ENCODE measurements at regions of chr3 and their contacts with region 1.

Region 1: DNA sequence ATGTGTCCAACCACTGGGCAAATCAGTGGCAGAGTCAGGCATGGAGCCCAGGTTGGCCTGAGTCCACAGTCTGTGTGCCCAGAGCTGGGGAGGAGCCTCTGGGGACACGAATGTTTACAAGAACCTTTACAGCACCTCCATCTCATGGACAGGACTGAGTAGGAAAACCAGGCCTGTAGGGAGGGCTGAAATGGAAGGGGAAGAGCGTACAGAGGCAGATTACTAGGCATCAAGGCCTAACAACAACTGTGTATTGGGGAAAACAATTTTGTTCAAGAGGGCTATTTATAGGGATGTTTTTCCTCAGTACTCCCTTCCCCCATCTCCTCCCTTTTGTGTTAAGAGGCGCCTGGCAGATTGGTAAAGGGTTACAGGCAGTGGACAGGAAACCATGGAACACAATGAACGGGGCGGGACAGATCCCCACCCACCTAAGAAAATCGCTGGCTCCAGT is 15.1 kb upstream of the ARHGAP31 start:
- DNase-seq: peak in 1 of 2 donors; percentile 55
- H3K4me3 ChIP-seq: no peak overlapping the region
- H3K27ac ChIP-seq: peak overlapping the region; percentile 31 to 45 (median 43)
- H3K4me1 ChIP-seq: peaks cover 4 to 6% of the 10 kb centered on the region in 2 donors
- H3K27me3 ChIP-seq: no peaks in the 10 kb centered on the region
- CTCF ChIP-seq: no peak
- POLR2A ChIP-seq: no peak

Region 2: DNA sequence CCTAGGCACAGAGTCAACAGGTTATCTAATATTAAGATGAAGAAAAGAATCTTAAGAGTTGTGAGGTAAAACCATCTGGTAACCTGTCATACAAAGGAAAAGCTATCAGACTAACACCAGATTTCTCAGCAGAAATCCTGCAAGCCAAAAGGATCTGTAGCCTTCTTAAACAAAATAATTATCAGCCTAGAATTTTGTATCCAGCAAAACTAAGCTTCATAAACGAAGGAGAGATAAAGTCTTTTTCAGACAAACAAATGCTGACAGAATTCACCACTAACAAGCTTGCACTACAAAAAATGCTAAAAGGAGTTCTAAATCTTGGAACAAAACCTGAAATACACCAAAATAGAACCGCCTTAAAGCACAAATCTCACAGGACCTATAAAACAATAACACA is 234.5 kb before region 1 on chr3:
- intact Hi-C with region 1: no loop called
- DNase-seq: no peak
- H3K4me3 ChIP-seq: no peak overlapping the region
- H3K27ac ChIP-seq: no peak overlapping the region
- H3K4me1 ChIP-seq: no peaks in the 10 kb centered on the region
- H3K27me3 ChIP-seq: no peaks in the 10 kb centered on the region
- CTCF ChIP-seq: no peak
- POLR2A ChIP-seq: no peak

Region 3: DNA sequence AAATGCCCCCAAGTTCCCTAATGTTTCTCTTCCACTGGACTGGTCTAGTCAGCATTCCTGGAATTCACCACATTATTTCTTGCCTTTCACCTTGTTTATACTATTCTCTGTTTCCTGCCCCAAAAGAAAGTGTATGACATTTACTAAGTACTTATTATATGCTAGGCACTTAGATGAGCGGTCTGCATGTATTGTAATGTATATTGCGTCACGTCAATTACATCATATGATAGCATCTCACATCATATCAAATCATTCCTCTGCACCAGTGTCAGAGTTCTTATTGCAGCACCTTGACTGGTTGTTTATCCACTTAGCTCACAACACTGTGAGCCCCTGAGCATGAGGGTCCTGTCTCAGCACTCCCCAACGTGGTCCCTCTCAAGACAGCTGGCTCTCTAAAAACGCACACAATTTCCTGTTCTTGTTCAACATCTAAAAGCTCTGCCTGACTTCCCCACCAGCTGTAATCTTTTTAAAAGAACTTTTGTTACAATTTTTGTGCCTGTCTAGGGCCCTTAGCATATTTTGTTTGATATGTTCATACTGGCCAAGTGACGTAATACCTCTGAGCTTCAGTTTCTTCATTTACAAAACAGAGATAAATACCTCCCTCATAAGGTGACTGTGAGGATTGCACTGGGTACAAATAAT is 73.8 kb after region 1 on chr3:
- intact Hi-C with region 1: loop called (anchors 10 kb)
- DNase-seq: no peak
- H3K4me3 ChIP-seq: no peak overlapping the region
- H3K27ac ChIP-seq: peak overlapping the region; percentile 27 to 75 (median 27)
- H3K4me1 ChIP-seq: peaks cover 55 to 56% of the 10 kb centered on the region in 2 donors
- H3K27me3 ChIP-seq: no peaks in the 10 kb centered on the region
- CTCF ChIP-seq: peak in 5 of 6 experiments; percentile 18 to 61 (median 41)
- POLR2A ChIP-seq: no peak

Region 4: DNA sequence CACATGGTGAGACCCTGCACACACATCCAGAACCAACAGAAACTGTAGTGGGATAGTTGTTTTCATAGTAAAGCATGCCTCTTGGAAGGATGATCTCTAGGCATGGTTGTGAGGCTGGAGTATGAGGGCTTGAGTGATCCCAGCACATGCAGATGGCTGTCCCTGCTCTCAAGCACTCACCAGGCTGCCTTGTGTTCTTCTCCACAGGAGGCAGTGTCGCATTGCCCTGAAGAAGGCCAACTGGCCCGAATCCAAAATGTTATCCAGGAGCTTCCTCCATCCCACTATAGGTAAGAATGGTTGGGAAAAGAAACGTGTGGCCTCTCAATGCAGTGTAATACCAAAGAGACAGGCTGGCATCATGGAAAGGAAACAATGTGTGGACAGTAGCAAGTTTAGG is 101.6 kb after region 1 on chr3:
- intact Hi-C with region 1: loop called (anchors 10 kb)
- DNase-seq: peak; percentile 27 to 38
- H3K4me3 ChIP-seq: no peak overlapping the region
- H3K27ac ChIP-seq: no peak overlapping the region
- H3K4me1 ChIP-seq: no peaks in the 10 kb centered on the region
- H3K27me3 ChIP-seq: no peaks in the 10 kb centered on the region
- CTCF ChIP-seq: peak in 2 of 6 experiments; percentile 12 to 30
- POLR2A ChIP-seq: no peak

Region 5: GRCh38 chr3:119463171-119464169 is 184.3 kb after region 1 on chr3 and contains the start of gene TMEM39A:
- intact Hi-C with region 1: loop called (anchors 10 kb)
- DNase-seq: peak; percentile 100
- H3K4me3 ChIP-seq: peak within 1 kb of the TSS; percentile 87 to 97 (median 89)
- H3K27ac ChIP-seq: peak within 1 kb of the TSS; percentile 83 to 85 (median 85)
- H3K4me1 ChIP-seq: peaks cover 0 to 25% of the 10 kb centered on the region in 2 donors
- H3K27me3 ChIP-seq: no peaks in the 10 kb centered on the region
- CTCF ChIP-seq: peak in 2 of 6 experiments; percentile 33
- POLR2A ChIP-seq: peak in 1 of 2 donors; percentile 91
- total RNA-seq, gene TMEM39A: 48.1 to 84.1 (median 59.8) TPM